ENCODE measurements at regions of chr5 and their contacts with region 1.

Region 1: GRCh38 chr5:170164921-170165320 is 59.2 kb downstream of the FOXI1 start:
- DNase-seq: no peak
- H3K4me3 ChIP-seq: no peak overlapping the region
- H3K27ac ChIP-seq: no peak overlapping the region
- H3K4me1 ChIP-seq: no peaks in the 10 kb centered on the region
- H3K27me3 ChIP-seq: no peaks in the 10 kb centered on the region
- CTCF ChIP-seq: no peak
- EP300 ChIP-seq: no peak
- POLR2A ChIP-seq: no peak

Region 2: GRCh38 chr5:170238456-170239196 is 73.7 kb after region 1 on chr5:
- intact Hi-C with region 1: loop called in 1 of 4 experiments (anchors 2 kb)
- DNase-seq: no peak
- H3K4me3 ChIP-seq: no peak overlapping the region
- H3K27ac ChIP-seq: no peak overlapping the region
- H3K4me1 ChIP-seq: no peaks in the 10 kb centered on the region
- H3K27me3 ChIP-seq: no peaks in the 10 kb centered on the region
- CTCF ChIP-seq: no peak
- EP300 ChIP-seq: no peak
- POLR2A ChIP-seq: no peak

Measured in ovary (tissue), 10 donors.